A549 (cell line): ENCODE measurements at regions of chr18 and their contacts with region 1.

Region 1: DNA sequence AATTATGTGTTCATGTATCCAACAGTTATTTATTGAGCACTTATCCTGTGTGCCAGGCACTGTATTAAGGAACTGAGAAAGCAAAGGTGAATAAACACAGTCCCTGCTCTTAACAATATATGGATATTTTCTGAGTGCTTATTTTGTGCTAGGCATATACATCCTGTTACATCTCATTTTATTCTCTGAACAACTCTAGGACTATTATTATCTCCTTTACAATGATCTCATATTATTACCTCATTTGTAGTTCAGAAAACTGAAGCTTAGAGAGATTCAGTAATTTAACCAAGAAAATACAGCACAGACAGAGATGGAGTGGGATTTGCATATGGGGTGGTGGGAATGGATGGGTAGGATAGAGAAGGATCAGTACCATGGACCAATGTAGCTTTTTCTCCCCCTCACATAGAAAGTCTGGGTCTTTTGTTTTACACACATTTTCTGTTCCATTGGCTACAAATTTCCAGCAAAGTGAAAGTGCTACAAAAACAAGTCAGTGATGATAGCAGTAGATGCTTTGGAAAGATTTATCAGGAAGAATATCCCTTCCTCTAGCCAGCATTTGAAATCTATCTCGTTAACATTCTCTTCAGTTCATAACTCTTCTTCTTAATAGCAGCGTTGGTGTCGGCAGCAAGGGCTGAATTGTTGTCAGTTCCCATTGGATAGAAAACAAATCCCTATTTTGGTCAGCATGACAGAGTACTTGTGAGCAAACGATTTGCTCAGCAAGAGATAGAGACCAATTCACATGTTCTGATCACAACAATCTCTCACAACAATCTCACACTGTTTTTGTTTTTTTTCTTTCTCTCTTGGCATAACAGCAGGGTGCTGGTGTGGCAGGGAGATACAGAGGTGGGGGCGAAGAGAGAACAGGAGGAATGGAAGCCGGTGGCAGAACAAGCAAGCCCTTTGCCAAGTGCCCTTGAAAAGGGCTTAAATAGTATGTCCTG is 102.2 kb upstream of the KCTD1 start:
- DNase-seq: no peak
- ATAC-seq: no peak
- H3K4me3 ChIP-seq: no peak overlapping the region
- H3K27ac ChIP-seq: peak overlapping the region; percentile 21 to 64; a peak in 4 of 6 replicates
- H3K4me1 ChIP-seq: peaks cover 22% of the 10 kb centered on the region
- CTCF ChIP-seq: no peak
- EP300 ChIP-seq: no peak
- POLR2A ChIP-seq: no peak
- RAD21 ChIP-seq: no peak

Region 2: DNA sequence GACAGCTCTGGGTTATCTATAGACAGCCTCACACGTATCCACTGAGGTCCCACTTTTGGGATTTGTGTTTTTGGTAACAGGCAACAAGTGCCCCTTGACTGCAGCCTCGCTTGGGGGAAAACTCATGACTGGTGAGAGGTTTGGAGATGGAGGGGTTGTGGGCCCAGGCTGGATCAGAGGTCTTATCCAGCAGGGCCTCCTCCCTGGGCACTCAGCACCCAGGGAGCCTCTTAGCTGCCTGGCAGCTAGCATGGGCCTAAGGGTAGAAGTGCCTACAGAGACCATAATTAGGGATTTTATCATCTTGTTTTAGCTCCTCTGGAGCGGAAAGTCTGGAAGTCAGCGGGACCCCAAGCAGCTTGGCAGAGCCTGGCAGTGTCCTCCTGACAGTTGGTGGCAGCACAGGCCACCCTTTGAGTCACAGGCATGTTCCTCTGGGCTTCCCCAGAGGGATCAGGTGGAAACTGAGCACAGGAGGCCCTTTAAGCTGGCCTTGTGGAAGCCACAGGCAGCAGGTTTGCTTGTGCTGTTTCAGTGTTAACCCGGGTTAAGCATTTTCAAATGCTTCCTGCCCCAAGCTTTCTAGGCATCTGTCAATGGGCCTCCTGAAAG is 245.3 kb before region 1 on chr18:
- CTCF ChIA-PET with region 1: interaction called, 16 read pairs
- POLR2A ChIA-PET with region 1: no interaction called
- DNase-seq: peak; percentile 32 to 68
- ATAC-seq: peak; percentile 90 to 95
- H3K4me3 ChIP-seq: no peak overlapping the region
- H3K27ac ChIP-seq: peak overlapping the region; percentile 70 to 79
- H3K4me1 ChIP-seq: peaks cover 8% of the 10 kb centered on the region; the same call in 2 of the 3 replicates
- CTCF ChIP-seq: peak; percentile 59
- EP300 ChIP-seq: no peak
- POLR2A ChIP-seq: no peak
- RAD21 ChIP-seq: peak; percentile 85 to 87

Region 3: DNA sequence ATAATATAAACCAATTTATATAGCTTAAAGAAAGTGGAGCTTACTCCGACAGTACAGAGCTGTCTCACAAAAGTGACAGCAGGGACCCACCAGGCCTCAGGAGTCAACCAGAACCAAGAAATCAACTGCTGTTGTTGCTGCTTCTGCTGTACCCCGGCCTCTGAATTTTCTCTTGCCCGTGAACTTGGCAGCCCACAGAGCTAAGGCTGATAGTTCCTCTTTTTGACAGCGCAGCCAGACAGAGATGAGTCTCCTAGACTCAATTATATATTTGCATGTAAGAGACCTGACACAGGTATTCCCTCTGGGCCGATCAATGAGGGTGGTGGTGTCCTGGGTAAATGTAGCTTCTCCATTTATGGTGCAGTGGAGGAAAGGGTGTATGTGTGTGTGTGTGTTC is 211.6 kb before region 1 on chr18:
- CTCF ChIA-PET with region 1: no interaction called
- POLR2A ChIA-PET with region 1: no interaction called
- DNase-seq: no peak
- ATAC-seq: no peak
- H3K4me3 ChIP-seq: no peak overlapping the region
- H3K27ac ChIP-seq: peak overlapping the region in 1 of 2 experiments; percentile 64; a peak in 4 of 6 replicates
- H3K4me1 ChIP-seq: peaks cover 26% of the 10 kb centered on the region
- CTCF ChIP-seq: no peak
- EP300 ChIP-seq: no peak
- POLR2A ChIP-seq: no peak
- RAD21 ChIP-seq: no peak